ENCODE measurements at regions of chrX and their contacts with region 1.

Region 1: DNA sequence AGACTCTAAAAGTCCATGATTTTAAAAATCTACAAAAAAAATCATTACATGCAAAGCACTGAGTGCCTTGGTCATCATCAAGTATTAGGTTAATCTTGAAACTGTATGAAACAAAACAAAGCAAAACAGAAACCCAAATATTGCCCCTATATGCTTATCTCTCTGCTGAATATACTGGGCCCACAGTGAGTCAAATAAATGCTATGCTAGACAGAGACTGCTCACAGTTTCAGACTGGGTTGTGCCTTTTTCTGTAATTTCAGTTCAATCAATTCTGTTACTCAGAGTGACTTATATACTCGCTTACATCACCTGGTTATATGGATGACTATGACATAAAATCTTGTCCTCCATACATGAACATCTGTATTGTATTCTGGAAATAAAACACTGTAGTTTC is 257.1 kb upstream of the ACTRT1 start:
- DNase-seq: no peak
- ATAC-seq: no peak
- H3K4me3 ChIP-seq: no peak overlapping the region
- H3K27ac ChIP-seq: no peak overlapping the region
- H3K4me1 ChIP-seq: no peaks in the 10 kb centered on the region
- H3K27me3 ChIP-seq: no peaks in the 10 kb centered on the region
- CTCF ChIP-seq: no peak
- EP300 ChIP-seq: no peak
- POLR2A ChIP-seq: no peak
- RAD21 ChIP-seq: no peak

Region 2: GRCh38 chrX:126741076-126741475 is 1568.2 kb before region 1 on chrX:
- CTCF ChIA-PET with region 1: no interaction called
- POLR2A ChIA-PET with region 1: no interaction called
- in situ Hi-C with region 1: loop called (anchors 10 kb)
- intact Hi-C with region 1: no loop called
- DNase-seq: no peak
- ATAC-seq: no peak
- H3K4me3 ChIP-seq: no peak overlapping the region
- H3K27ac ChIP-seq: no peak overlapping the region
- H3K4me1 ChIP-seq: no peaks in the 10 kb centered on the region
- H3K27me3 ChIP-seq: no peaks in the 10 kb centered on the region
- CTCF ChIP-seq: no peak
- EP300 ChIP-seq: no peak
- POLR2A ChIP-seq: no peak
- RAD21 ChIP-seq: no peak